ENCODE measurements at regions of chr12 and their contacts with region 1.

Region 1: GRCh38 chr12:74957231-74957630 is 252.4 kb downstream of the KCNC2 start:
- DNase-seq: no peak
- H3K4me3 ChIP-seq: no peak overlapping the region
- H3K27ac ChIP-seq: no peak overlapping the region
- H3K4me1 ChIP-seq: no peaks in the 10 kb centered on the region
- H3K27me3 ChIP-seq: no peaks in the 10 kb centered on the region
- CTCF ChIP-seq: no peak
- POLR2A ChIP-seq: no peak

Region 2: DNA sequence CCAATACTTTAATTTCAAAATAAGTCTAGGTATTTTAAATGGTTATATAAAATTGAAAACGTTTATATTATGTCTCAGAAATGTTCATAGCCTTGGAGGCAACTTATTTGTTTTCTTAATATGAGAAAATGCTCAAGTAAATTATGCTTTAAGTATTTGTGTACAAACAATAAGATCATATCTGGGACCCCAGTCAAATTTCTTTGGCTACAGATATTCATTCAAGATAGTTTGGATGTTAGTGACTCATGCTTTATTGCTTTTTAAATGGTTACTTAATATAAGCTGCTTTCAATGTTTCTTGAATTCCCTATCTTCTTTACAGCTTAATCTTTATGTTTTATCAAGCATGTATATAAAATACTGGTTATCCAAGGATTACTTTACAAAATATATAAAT is 38.9 kb before region 1 on chr12:
- intact Hi-C with region 1: loop called (anchors 2 kb)
- DNase-seq: no peak
- H3K4me3 ChIP-seq: no peak overlapping the region
- H3K27ac ChIP-seq: no peak overlapping the region
- H3K4me1 ChIP-seq: no peaks in the 10 kb centered on the region
- H3K27me3 ChIP-seq: no peaks in the 10 kb centered on the region
- CTCF ChIP-seq: no peak
- POLR2A ChIP-seq: no peak

Measured in breast epithelium (tissue), 4 donors.